ENCODE measurements at regions of chr18 and their contacts with region 1.

Region 1: GRCh38 chr18:44437603-44438002 is 243.1 kb upstream of the SETBP1 start:
- DNase-seq: no peak
- ATAC-seq: no peak

Region 2: DNA sequence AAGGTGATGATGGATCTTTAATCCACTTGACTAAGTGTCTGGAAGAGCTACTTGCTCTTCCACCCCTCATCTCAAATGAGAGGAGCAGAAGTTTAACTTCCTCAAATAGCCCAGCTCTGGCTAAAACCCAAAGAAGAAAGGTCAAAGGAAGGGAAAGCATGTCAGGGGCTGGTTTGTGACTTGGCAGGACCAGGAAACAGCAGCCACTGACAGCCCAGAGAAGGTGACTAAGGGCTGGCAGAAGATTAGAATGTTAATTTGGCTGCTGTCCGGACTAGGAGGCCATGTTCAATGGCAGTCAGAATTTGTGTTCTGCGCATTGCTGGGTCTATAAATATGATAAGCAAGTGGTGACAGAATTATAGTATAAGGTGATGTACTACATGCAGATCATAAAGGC is 629.3 kb after region 1 on chr18:
- intact Hi-C with region 1: loop called (anchors 5 kb)
- DNase-seq: peak; percentile 50
- ATAC-seq: peak; percentile 93

Measured in Right ventricle myocardium superior (tissue), 1 donor.